T-cell (primary cell): ENCODE measurements at regions of chr15 and their contacts with region 1.

Region 1: DNA sequence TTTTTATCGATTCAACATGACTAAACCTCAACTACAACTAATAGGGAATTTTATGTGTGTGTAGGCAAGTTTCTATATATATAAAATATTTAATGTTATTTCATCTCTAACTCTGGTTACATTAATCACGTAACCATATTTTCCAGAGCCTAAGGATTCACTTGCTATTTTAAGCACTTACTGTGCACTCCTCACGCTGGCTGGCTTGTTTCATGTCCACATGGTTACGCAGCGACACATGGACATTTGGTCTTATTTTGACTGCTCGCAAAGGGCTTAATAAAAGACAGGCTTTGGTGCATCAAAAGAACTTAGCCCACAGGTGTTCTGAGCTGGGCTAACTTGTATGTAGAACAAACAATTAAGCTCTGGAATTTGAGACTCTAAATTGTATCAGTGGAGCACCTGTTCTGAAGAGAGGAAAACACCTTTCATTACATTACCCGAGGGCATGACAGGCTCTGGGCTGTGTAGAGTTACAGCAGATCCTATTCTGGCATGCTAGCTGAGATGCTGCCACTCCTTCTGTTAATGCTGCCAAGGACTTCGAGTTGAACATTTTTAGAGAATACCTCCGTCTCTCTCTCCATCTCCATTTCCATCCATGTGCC is 130.0 kb upstream of the NR2F2 start:
- DNase-seq: no peak
- ATAC-seq: no peak
- H3K4me3 ChIP-seq: no peak overlapping the region
- H3K4me3 Mint-ChIP-seq: no peak overlapping the region
- H3K27ac ChIP-seq: no peak overlapping the region
- H3K27ac Mint-ChIP-seq: no peak overlapping the region
- H3K4me1 ChIP-seq: no peaks in the 10 kb centered on the region
- H3K4me1 Mint-ChIP-seq: no peaks in the 10 kb centered on the region
- H3K27me3 ChIP-seq: peaks cover 0 to 4% of the 10 kb centered on the region in 2 experiments
- H3K27me3 Mint-ChIP-seq: peaks cover 17 to 19% of the 10 kb centered on the region in 2 donors

Region 2: GRCh38 chr15:96234109-96234892 is 33.8 kb after region 1 on chr15:
- CTCF ChIA-PET with region 1: no interaction called
- POLR2A ChIA-PET with region 1: no interaction called
- DNase-seq: no peak
- ATAC-seq: no peak
- H3K4me3 ChIP-seq: no peak overlapping the region
- H3K4me3 Mint-ChIP-seq: no peak overlapping the region
- H3K27ac ChIP-seq: no peak overlapping the region
- H3K27ac Mint-ChIP-seq: no peak overlapping the region
- H3K4me1 ChIP-seq: no peaks in the 10 kb centered on the region
- H3K4me1 Mint-ChIP-seq: no peaks in the 10 kb centered on the region
- H3K27me3 ChIP-seq: no peaks in the 10 kb centered on the region
- H3K27me3 Mint-ChIP-seq: peaks cover 0 to under 1% of the 10 kb centered on the region in 2 donors

Region 3: DNA sequence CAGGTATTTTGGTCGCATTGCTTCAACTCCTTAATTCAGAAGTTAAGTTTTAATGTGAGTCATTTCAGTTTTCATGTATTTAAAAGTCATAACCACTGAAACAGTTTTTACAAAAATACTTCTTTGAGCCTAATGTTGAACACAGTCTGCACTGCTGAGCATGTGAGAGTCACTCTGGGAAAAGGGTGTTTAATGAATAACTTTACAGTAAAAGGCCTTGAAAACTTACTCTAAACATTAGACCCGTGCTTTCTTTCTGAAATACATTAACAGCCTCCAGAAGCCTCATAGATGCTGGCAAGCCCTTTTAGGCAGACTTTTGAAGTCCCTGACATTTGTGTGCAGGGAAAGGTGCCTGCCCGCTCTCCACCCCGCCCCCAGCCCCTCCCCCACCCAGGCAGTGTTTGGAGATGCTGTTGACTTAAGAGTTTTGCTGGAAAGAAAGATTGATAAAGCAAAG is 61.1 kb after region 1 on chr15:
- CTCF ChIA-PET with region 1: interaction called in 1 of 2 experiments, 10 read pairs
- POLR2A ChIA-PET with region 1: no interaction called
- DNase-seq: no peak
- ATAC-seq: no peak
- H3K4me3 ChIP-seq: no peak overlapping the region
- H3K4me3 Mint-ChIP-seq: no peak overlapping the region
- H3K27ac ChIP-seq: no peak overlapping the region
- H3K27ac Mint-ChIP-seq: no peak overlapping the region
- H3K4me1 ChIP-seq: no peaks in the 10 kb centered on the region
- H3K4me1 Mint-ChIP-seq: no peaks in the 10 kb centered on the region
- H3K27me3 ChIP-seq: no peaks in the 10 kb centered on the region
- H3K27me3 Mint-ChIP-seq: peaks cover 0 to 6% of the 10 kb centered on the region in 2 donors